Ovary (tissue), 10 donors: ENCODE measurements at regions of chr16 and their contacts with region 1.

Region 1: GRCh38 chr16:87278191-87279095 is 38.7 kb downstream of the C16orf95 start:
- DNase-seq: peak; percentile 50 to 84 (median 62)
- H3K4me3 ChIP-seq: no peak overlapping the region
- H3K27ac ChIP-seq: no peak overlapping the region
- H3K4me1 ChIP-seq: no peaks in the 10 kb centered on the region
- H3K27me3 ChIP-seq: no peaks in the 10 kb centered on the region
- CTCF ChIP-seq: peak; percentile 31 to 64 (median 61)
- EP300 ChIP-seq: no peak
- POLR2A ChIP-seq: no peak

Region 2: DNA sequence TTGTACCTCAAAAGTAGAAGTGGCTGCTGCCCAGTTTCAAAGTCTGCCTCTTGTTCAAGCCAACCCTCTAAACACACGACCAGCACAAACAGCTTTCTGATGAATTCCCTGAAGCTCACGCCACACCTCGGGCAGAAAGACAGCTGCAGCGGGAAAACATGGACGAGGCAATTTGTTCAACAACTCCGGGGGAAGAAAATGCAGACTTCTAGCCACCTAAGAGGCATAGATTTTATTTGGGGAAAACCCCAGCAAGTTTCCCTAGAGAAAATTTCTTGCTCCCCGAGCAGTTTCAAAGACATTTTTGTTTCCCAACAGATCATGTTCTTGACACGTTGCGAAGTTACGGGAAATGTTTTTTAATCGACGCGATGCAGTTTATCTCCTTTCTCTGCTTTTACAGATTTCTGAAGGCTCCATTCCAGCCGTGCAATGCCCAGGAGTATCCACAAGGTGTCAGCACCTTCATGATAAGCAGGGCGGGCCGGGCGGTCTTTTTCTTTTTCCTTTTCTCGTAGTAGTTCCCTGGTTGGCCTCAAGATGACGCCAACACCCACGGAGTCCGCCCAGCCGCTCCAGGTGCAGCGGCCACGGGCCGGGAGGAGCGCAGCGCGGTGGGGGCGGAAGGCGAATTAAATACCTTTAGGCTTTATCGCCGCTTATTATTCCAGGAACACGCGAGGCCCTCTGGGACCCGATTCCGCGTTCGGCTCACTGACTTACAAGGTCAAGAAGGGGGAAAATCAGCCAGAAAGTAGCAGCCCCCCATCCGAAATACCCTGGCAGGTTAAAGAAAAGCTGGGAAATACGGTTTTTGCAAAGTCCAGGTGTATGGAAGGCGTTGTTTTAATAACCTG is 714.7 kb before region 1 on chr16:
- intact Hi-C with region 1: loop called (anchors 2 to 10 kb)
- DNase-seq: peak; percentile 74 to 93 (median 86)
- H3K4me3 ChIP-seq: peak overlapping the region; percentile 9
- H3K27ac ChIP-seq: no peak overlapping the region
- H3K4me1 ChIP-seq: peaks cover 4% of the 10 kb centered on the region
- H3K27me3 ChIP-seq: no peaks in the 10 kb centered on the region
- CTCF ChIP-seq: peak; percentile 98
- EP300 ChIP-seq: no peak
- POLR2A ChIP-seq: no peak

Region 3: DNA sequence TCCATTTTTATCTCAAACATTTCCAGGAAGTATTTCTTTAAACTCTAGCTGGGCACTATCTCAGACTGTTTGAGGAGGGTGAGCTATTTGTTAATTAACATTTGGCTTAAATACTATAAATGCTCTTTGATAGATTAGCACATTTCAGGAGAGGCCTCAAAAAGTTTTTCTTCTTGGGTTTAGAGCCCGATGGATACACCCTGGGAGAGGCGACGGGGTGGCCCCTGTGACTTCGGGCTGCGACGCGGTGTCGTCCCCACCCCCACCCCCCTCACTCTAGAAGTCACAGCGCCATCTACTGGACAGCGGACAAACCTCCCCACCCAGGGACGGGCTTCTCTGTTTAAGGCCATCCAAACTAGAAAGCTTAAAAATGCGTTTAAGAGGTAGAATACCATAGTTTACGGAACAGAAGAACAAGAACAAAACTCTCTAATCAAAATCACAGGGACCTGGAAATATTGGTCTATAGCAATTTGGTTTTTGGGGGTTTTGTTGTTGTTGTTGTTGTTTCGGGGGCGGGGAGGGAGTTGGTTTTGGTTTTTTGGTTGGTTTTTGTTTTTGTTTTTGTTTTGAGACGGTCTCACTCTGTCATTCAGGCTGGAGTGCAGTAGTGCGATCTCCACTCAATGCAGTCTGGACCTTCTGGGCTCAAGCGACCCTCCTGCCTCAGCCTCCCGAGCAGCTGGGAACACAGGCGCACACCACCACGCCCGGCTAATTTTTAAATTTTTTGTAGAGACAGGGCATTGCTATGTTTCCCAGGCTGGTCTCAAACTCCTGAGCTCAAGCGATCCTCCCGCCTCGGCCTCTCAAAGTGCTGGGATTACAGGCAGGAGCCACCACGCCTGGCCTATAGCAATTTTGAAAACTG is 215.6 kb before region 1 on chr16:
- intact Hi-C with region 1: loop called in 1 of 4 experiments (anchors 10 kb)
- DNase-seq: peak; percentile 50 to 73 (median 59)
- H3K4me3 ChIP-seq: no peak overlapping the region
- H3K27ac ChIP-seq: no peak overlapping the region
- H3K4me1 ChIP-seq: no peaks in the 10 kb centered on the region
- H3K27me3 ChIP-seq: no peaks in the 10 kb centered on the region
- CTCF ChIP-seq: peak; percentile 31 to 47 (median 34)
- EP300 ChIP-seq: no peak
- POLR2A ChIP-seq: no peak

Region 4: DNA sequence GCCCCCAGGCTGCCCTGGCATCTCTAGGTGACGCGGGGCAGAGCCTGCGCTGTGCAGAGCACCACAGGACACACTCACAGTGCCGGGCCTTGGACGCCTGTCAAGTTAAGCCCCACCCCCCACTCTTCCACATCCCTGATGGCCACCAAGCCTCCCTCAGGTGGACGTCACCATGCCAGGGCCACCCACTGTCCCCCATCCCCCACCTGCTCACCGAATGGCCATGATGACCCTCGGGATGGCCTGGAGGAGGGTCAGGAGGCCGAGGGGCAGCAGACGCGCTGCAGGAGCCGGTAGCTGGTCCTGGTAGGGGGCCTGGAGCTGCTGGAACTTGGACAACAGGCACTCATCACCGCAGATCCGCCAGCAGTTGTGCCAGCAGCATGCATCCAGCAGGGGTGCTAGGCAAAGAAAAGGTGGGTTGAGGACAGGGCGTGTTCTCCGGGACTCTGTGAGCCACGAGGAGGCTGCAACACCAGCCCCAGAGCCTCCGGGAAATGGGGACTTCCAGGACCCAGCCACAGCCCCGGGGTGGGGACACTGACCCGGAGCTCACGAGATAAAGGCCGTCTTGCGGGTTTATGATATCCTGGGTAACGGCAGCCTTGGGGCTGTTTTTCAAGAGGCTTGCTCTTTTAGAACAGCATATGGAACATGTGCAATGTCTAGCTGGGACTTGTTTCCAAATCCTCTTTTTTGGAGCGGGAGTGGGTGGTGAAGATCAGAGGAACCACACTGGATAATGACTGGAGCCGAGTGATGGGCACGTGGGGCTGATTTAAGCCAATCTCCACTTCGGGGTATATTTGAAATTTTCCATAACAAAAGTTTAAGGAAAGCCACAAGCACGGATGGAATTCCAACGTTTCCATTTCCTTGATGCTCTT is 27.3 kb after region 1 on chr16:
- intact Hi-C with region 1: loop called in 1 of 4 experiments (anchors 1 kb)
- DNase-seq: no peak
- H3K4me3 ChIP-seq: no peak overlapping the region
- H3K27ac ChIP-seq: no peak overlapping the region
- H3K4me1 ChIP-seq: no peaks in the 10 kb centered on the region
- H3K27me3 ChIP-seq: no peaks in the 10 kb centered on the region
- CTCF ChIP-seq: no peak
- EP300 ChIP-seq: no peak
- POLR2A ChIP-seq: no peak